AG04449 (cell line): ENCODE measurements at regions of chr19 and their contacts with region 1.

Region 1: DNA sequence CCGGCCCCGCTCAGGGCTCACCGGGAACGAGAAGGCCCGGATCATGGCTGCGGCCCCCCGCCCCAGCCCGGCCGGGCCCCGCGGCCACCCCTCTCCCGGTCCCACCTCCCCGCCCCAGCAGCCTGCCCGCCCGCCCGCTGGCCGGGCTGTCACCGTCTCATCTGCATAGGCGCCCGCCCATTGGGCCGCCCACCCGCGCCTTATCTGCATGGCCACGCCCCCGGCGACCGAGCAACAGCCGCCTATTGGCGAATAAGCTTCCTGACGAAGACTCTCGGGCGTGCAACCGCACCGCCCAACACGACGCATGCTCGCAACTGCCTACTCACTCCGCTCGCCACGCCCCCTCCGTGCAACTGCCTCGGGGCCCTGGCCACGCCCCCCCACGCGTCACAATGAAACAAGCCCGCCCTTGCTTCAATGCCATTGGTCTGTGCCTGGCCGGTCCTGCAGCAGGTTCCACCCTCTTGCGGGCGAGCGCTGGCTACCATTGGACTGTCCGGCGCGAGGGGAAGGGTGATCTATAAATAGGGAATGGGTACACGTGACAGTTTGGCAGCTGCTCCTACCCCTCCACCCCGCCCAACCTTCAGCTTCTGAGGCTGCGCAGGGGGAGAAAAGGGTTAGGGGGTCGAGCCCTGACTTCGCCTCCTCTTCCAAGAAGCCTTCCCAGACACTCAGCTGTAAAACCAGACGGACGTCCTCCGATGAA is at the start of gene DACT3:
- DNase-seq: peak; percentile 97
- H3K4me3 ChIP-seq: peak within 1 kb of the TSS; percentile 69
- CTCF ChIP-seq: no peak

Region 2: GRCh38 chr19:46529622-46530462 is 131.3 kb before region 1 on chr19:
- CTCF ChIA-PET with region 1: interaction called, 32 read pairs
- POLR2A ChIA-PET with region 1: no interaction called
- DNase-seq: peak; percentile 3
- H3K4me3 ChIP-seq: no peak overlapping the region; the same call in 1 of the 2 replicates
- CTCF ChIP-seq: peak; percentile 83

Region 3: DNA sequence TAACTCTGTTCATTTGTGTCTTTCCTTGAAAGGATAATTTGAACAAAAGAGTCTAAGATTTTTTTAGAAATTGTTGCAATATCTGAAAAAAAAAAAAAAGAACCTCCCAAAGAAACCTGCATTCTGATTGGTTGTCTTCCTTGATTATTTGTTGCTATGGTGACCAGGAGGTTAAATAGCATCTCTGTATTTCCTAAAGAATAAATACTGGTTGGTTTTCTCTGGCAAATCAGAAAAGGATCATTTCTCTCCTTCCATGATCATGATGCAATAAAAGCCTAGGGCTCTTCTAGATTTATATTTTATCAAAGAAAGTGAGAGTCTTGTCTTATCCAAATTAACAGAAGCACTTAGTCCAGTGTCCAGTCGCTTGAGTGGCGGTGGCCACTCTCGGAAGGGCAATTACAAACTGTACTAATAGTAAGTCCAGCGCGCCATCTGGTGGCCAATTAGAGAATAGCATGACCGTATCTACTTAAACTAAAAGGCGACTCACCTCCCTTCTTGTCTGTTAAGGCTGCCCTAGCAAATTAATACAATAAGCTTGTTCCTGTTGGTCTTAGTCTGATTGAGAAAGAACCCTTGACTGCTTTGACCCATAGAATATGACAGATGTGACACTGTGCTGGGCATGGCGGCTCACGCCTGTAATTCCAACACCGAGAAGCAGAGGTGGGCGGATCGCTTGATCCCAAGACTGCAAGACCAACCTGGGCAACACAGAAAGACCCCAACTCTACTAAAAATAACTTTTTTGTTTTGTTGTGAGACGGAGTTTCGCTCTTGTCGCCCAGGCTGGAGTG is 118.5 kb before region 1 on chr19:
- CTCF ChIA-PET with region 1: interaction called, 17 read pairs
- POLR2A ChIA-PET with region 1: no interaction called
- DNase-seq: peak; percentile 73
- H3K4me3 ChIP-seq: no peak overlapping the region
- CTCF ChIP-seq: peak; percentile 60

Region 4: GRCh38 chr19:46614114-46614722 is 47.0 kb before region 1 on chr19:
- CTCF ChIA-PET with region 1: interaction called, 685 read pairs
- POLR2A ChIA-PET with region 1: interaction called, 6 read pairs
- DNase-seq: no peak
- H3K4me3 ChIP-seq: no peak overlapping the region
- CTCF ChIP-seq: peak; percentile 87

Region 5: DNA sequence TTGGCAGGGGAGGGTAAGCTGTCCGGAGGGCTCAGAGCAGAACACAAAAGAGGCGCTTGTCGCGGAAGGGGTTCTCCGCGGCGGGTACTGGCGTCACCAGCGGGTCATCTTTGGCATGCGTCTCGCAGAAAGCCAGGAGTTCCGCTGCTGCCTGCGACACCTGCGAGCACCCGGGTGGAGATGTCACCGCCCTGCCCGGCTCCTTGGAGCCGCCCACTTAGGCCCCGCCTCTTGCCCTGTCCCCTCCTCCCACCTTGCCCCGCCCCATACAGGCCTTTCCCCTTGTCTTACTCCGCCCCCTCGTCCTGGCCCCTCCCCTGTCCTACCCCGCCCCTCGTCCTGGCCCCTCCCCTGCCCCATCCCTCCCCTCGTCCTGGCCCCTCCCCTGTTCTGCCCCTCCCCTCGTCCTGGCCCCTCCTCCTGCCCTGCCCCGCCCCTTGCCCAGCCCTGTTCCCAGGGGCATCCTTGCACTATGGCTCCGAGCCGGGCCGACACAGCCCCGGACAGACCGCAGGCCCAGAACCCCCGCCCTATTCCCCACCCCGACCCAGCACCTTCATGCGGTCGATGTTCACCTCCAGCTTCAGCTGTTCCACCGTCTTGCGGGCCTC is 27.0 kb before region 1 on chr19:
- CTCF ChIA-PET with region 1: interaction called, 94 read pairs
- POLR2A ChIA-PET with region 1: interaction called, 4 read pairs
- DNase-seq: no peak
- H3K4me3 ChIP-seq: peak overlapping the region; percentile 54
- CTCF ChIP-seq: no peak

Region 6: DNA sequence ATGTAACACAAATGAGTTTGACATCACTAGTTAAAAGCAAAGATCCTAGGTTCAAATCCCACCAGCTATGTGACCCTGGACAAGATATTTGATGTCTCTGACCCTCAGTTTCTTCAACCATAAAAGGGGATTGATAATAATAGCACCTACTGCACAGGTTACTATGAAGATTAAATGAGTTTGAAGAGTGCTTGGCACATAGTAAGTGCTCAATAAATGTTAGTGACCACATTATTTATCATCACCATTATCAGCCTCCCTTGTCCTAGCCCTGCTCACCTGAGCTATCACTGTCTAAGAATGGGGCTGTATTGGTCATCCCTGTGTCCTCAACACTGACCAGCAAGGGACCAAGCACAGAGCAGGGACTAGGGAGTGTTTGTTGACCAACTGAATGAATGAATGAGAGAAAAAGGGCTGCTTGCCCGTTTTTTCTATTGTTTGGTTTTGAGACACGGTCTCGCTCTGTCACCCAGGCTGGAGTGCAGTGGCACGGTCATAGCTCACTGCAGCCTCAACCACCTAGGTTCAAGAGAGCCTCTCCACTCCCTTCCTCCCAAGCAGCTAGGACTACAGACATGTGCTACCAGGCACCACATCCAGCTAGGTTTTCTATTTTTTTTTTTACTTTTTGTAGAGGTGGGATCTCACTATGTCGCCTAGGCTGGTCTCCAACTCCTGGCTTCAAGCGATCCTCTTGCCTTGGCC is 26.4 kb after region 1 on chr19:
- CTCF ChIA-PET with region 1: interaction called, 18 read pairs
- POLR2A ChIA-PET with region 1: interaction called, 3 read pairs
- DNase-seq: no peak
- H3K4me3 ChIP-seq: no peak overlapping the region
- CTCF ChIP-seq: no peak